ENCODE measurements at regions of chr1 and their contacts with region 1.

Region 1: GRCh38 chr1:180470031-180470430 is 32.3 kb downstream of the ACBD6 start:
- DNase-seq: no peak
- H3K4me3 ChIP-seq: no peak overlapping the region
- H3K27ac ChIP-seq: no peak overlapping the region
- H3K4me1 ChIP-seq: no peaks in the 10 kb centered on the region
- H3K27me3 ChIP-seq: no peaks in the 10 kb centered on the region
- CTCF ChIP-seq: no peak
- POLR2A ChIP-seq: no peak

Region 2: DNA sequence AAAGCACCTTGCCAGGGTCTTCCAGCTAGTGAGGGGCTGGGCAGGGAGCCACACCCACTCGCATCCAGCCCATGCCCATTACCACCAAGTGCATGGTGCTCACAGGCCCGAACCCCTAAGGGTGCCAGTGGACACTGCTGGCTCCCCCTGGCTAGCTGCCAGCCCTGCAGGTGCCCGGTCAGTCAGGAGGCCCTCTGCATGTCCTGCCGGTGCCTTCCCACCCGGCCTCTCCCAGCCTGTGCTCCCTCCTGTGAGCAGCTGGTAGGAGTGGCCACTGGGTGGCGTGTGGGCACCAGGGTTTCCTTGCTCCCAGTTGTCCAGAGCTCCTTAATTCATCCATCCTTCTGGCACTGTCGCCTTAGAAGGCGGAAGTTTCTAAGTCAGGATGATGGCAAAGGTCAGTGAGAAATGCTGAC is 281.9 kb before region 1 on chr1:
- intact Hi-C with region 1: loop called (anchors 10 kb)
- DNase-seq: no peak
- H3K4me3 ChIP-seq: no peak overlapping the region
- H3K27ac ChIP-seq: no peak overlapping the region
- H3K4me1 ChIP-seq: peaks cover 0 to 55% (median 13%) of the 10 kb centered on the region in 6 donors
- H3K27me3 ChIP-seq: no peaks in the 10 kb centered on the region
- CTCF ChIP-seq: peak; percentile 20 to 76 (median 56)
- POLR2A ChIP-seq: no peak

Region 3: GRCh38 chr1:180252638-180253536 is 217.1 kb before region 1 on chr1:
- intact Hi-C with region 1: loop called (anchors 10 kb)
- DNase-seq: peak; percentile 94
- H3K4me3 ChIP-seq: no peak overlapping the region
- H3K27ac ChIP-seq: peak overlapping the region in 1 of 8 donors; percentile 46
- H3K4me1 ChIP-seq: peaks cover 0 to 17% (median 7%) of the 10 kb centered on the region in 6 donors
- H3K27me3 ChIP-seq: peaks cover 0 to 64% (median 15%) of the 10 kb centered on the region in 7 donors
- CTCF ChIP-seq: peak; percentile 72 to 94 (median 86)
- POLR2A ChIP-seq: no peak

Region 4: GRCh38 chr1:180954005-180954800 is 484.2 kb after region 1 on chr1:
- intact Hi-C with region 1: no loop called
- DNase-seq: peak; percentile 87
- H3K4me3 ChIP-seq: peak overlapping the region; percentile 54 to 90 (median 60)
- H3K27ac ChIP-seq: peak overlapping the region in 4 of 8 donors; percentile 8 to 72 (median 45)
- H3K4me1 ChIP-seq: peaks cover 0 to 29% (median 16%) of the 10 kb centered on the region in 6 donors
- H3K27me3 ChIP-seq: no peaks in the 10 kb centered on the region
- CTCF ChIP-seq: peak in 2 of 11 experiments; percentile 15 to 20
- POLR2A ChIP-seq: no peak

Measured in spleen (tissue), 13 donors.